Activated CD4-positive, alpha-beta T cell treated with anti-CD3 and anti-CD28 coated beads, Interleukin-2, amount 10 ng/mL, durations not matched to agents 24 days and 14 days (primary cell): ENCODE measurements at regions of chr16 and their contacts with region 1.

Region 1: GRCh38 chr16:76932541-76933211 is 258.3 kb upstream of the MON1B start:
- DNase-seq: no peak
- H3K4me3 Mint-ChIP-seq: no peak overlapping the region
- H3K27ac Mint-ChIP-seq: peak overlapping the region; percentile 20
- H3K4me1 Mint-ChIP-seq: peaks cover 3% of the 10 kb centered on the region
- H3K27me3 Mint-ChIP-seq: no peaks in the 10 kb centered on the region

Region 2: GRCh38 chr16:76800196-76800595 is 132.5 kb before region 1 on chr16:
- intact Hi-C with region 1: loop called (anchors 2 kb)
- DNase-seq: no peak
- H3K4me3 Mint-ChIP-seq: no peak overlapping the region
- H3K27ac Mint-ChIP-seq: no peak overlapping the region
- H3K4me1 Mint-ChIP-seq: no peaks in the 10 kb centered on the region
- H3K27me3 Mint-ChIP-seq: no peaks in the 10 kb centered on the region

Region 3: DNA sequence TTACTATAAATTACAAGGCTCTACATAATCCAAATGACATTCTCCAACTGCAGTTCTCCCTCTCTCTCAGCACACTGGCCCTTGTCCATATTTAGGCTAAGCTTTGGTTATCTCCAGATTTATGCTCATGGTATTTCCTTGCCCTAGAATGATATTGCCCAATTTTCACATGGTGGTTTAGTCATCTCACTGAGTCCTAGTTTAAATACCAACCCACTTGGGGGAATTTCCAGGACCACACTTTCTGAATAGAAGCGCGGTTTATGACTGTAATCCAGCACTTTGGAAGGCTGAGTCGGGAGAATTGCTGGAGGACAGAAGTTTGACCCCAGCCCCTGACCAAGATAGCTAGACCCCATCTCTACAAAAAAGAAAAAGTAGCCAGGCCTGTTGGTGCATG is 21.7 kb before region 1 on chr16:
- intact Hi-C with region 1: no loop called
- DNase-seq: no peak
- H3K4me3 Mint-ChIP-seq: no peak overlapping the region
- H3K27ac Mint-ChIP-seq: no peak overlapping the region
- H3K4me1 Mint-ChIP-seq: no peaks in the 10 kb centered on the region
- H3K27me3 Mint-ChIP-seq: no peaks in the 10 kb centered on the region

Region 4: DNA sequence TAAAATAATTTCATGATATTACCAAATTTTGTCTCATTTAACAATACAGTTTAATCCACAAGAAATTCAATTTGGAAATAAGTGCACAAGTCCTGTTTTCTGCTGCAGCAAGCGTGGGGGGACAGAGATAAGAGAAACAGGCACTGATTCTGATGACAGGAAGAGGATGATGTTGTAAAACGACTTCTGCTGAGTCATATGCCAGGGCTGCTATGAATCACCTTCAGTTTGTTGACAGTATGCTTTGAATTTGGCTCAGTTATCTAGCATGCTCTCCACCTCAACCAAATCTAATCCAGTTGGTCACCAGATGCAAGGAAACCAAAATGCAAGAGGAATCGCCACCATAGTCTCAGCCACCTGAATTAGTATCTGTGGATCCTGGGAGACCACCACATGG is 14.2 kb after region 1 on chr16:
- intact Hi-C with region 1: no loop called
- DNase-seq: no peak
- H3K4me3 Mint-ChIP-seq: no peak overlapping the region
- H3K27ac Mint-ChIP-seq: no peak overlapping the region
- H3K4me1 Mint-ChIP-seq: no peaks in the 10 kb centered on the region
- H3K27me3 Mint-ChIP-seq: no peaks in the 10 kb centered on the region

Region 5: DNA sequence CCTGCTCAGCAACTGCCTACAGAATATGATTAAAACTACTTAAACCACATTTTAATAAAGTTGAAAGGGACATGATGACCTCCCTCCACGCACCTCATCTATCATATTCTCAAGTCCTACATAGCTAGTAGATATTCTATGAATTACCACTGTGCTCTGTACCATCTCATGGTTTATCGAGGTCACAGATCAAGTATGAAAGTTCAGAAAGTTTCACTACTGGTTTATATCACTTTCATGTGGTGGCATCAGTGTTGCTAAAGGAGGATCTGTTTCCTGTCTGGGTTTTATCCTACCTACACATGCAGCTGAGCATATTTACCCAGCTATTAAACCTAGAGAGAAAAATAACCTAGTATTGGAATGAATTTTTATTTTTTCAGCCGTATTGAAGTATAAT is 43.4 kb after region 1 on chr16:
- intact Hi-C with region 1: loop called (anchors 2 kb)
- DNase-seq: no peak
- H3K4me3 Mint-ChIP-seq: no peak overlapping the region
- H3K27ac Mint-ChIP-seq: no peak overlapping the region
- H3K4me1 Mint-ChIP-seq: peaks cover 2% of the 10 kb centered on the region
- H3K27me3 Mint-ChIP-seq: peaks cover 2% of the 10 kb centered on the region